PC-9 (cell line): ENCODE measurements at regions of chr5 and their contacts with region 1.

Region 1: DNA sequence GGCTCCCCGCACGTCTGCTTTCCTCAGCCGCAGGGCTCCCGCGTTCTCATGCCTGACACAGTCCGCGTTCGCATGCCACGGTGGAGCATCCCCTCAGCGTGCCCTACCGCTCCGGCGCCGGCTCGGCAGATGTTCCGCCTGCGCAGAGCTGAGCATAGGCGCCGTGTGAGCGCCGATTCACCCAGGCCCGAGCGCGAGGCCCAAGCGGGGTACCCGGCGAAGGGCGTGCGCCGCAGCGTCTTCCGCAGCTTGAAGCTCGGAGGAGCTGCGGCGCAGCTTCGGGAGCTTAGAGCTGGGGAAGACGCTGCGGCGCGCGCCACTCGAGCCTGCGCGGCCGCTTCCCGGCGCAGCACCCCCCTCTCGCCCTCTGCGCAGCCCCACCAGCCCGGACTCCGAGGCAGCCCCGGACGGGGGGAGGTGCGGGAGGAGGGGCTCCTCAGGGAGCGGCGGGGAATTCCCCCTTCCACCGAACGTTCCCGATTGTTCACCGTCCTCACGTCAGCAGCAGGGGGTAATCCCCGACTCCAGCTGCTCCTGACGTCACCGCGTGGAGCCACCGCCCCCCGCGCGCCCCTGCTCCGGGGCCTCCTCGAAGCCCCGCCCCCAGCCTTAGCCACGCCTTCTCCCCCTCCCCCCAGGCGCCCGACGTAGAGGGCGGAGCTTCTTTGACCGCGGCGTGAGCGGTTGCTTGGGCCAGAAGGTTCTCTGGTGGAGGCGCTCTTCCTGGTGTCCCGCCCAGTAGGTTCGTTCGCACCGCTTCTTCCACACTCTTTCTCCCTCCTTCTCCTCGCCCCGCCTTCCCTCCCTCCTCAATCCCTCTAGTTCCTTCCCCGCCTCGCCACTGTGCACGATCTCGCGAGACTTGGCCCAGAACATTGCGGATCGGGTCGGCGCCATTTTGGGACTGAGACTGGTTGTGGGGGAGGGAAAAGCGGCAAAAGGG is at the start of gene GPBP1:
- DNase-seq: peak; percentile 95 to 97
- H3K4me3 ChIP-seq: peak within 1 kb of the TSS; percentile 76
- H3K27ac ChIP-seq: peak within 1 kb of the TSS; percentile 98
- H3K4me1 ChIP-seq: peaks cover 32% of the 10 kb centered on the region
- H3K27me3 ChIP-seq: no peaks in the 10 kb centered on the region
- CTCF ChIP-seq: no peak
- total RNA-seq, gene GPBP1: 62.4 and 75.0 TPM in 2 replicates

Region 2: DNA sequence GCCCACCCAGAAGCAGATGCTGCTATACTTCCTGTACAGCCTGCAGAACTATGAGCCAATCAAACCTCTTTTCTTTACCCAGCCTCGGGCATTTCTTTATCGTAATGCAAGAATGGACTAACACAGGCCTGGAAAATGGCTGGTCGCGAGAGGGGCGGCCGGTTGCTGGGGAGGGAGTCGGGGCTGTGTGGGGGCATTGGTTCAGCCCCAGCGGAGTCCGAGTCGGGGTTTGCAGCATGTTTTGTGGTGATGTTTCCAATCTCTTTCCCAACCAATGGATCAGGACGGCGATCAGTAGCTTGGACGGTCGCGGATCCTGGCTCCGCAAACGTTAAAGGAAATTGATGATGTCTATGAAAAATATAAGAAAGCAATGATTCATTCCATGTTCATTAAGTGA is 1341.0 kb before region 1 on chr5:
- CTCF ChIA-PET with region 1: interaction called, 11 read pairs
- POLR2A ChIA-PET with region 1: no interaction called
- intact Hi-C with region 1: no loop called
- DNase-seq: no peak
- H3K4me3 ChIP-seq: no peak overlapping the region
- H3K27ac ChIP-seq: no peak overlapping the region
- H3K4me1 ChIP-seq: no peaks in the 10 kb centered on the region
- H3K27me3 ChIP-seq: no peaks in the 10 kb centered on the region
- CTCF ChIP-seq: no peak

Region 3: DNA sequence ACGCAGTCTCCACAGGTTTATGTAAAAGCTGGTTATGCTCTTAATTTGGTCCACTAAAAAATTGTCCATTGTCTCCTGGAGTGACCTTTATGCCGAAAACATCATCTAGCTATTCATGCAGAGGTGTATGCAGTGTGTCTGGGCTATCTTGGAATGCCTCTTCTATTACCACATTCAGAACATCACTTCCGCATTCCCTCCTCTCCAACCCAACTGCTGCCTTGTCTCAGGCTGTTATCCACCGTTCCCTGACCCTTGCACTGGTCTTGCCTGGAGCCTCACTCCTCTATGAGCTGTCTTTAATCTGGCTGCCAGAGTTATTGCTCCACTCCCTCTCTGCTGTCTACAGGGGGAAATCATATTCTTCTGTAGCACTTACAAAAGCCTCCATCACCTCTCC is 726.2 kb before region 1 on chr5:
- CTCF ChIA-PET with region 1: no interaction called
- POLR2A ChIA-PET with region 1: interaction called, 21 read pairs
- intact Hi-C with region 1: no loop called
- DNase-seq: peak; percentile 75 to 96
- H3K4me3 ChIP-seq: no peak overlapping the region
- H3K27ac ChIP-seq: peak overlapping the region; percentile 79
- H3K4me1 ChIP-seq: peaks cover 32% of the 10 kb centered on the region
- H3K27me3 ChIP-seq: no peaks in the 10 kb centered on the region
- CTCF ChIP-seq: no peak

Region 4: GRCh38 chr5:56909294-56910209 is 263.9 kb before region 1 on chr5 and contains the start of gene SETD9:
- CTCF ChIA-PET with region 1: interaction called, 12 read pairs
- POLR2A ChIA-PET with region 1: interaction called, 4 read pairs
- intact Hi-C with region 1: loop called (anchors 1 kb)
- DNase-seq: peak; percentile 87 to 97
- H3K4me3 ChIP-seq: peak within 1 kb of the TSS; percentile 98
- H3K27ac ChIP-seq: peak within 1 kb of the TSS; percentile 92
- H3K4me1 ChIP-seq: peaks cover 12% of the 10 kb centered on the region
- H3K27me3 ChIP-seq: no peaks in the 10 kb centered on the region
- CTCF ChIP-seq: no peak
- total RNA-seq, gene SETD9: 6.5 and 7.3 TPM in 2 replicates

Region 5: GRCh38 chr5:57199866-57200265 is 26.4 kb after region 1 on chr5:
- CTCF ChIA-PET with region 1: no interaction called
- POLR2A ChIA-PET with region 1: interaction called, 12 read pairs
- intact Hi-C with region 1: no loop called
- DNase-seq: no peak
- H3K4me3 ChIP-seq: no peak overlapping the region
- H3K27ac ChIP-seq: no peak overlapping the region
- H3K4me1 ChIP-seq: peaks cover 8% of the 10 kb centered on the region
- H3K27me3 ChIP-seq: no peaks in the 10 kb centered on the region
- CTCF ChIP-seq: no peak

Region 6: GRCh38 chr5:57221049-57221568 is 47.7 kb after region 1 on chr5:
- CTCF ChIA-PET with region 1: no interaction called
- POLR2A ChIA-PET with region 1: no interaction called
- intact Hi-C with region 1: loop called (anchors 2 kb)
- DNase-seq: peak in 1 of 2 experiments; percentile 59
- H3K4me3 ChIP-seq: no peak overlapping the region
- H3K27ac ChIP-seq: peak overlapping the region; percentile 38; the same call in 1 of the 2 replicates
- H3K4me1 ChIP-seq: peaks cover 32% of the 10 kb centered on the region
- H3K27me3 ChIP-seq: no peaks in the 10 kb centered on the region
- CTCF ChIP-seq: peak; percentile 91

Region 7: GRCh38 chr5:57394421-57395210 is 221.2 kb after region 1 on chr5:
- CTCF ChIA-PET with region 1: no interaction called
- POLR2A ChIA-PET with region 1: no interaction called
- intact Hi-C with region 1: no loop called
- DNase-seq: no peak
- H3K4me3 ChIP-seq: no peak overlapping the region
- H3K27ac ChIP-seq: no peak overlapping the region
- H3K4me1 ChIP-seq: no peaks in the 10 kb centered on the region
- H3K27me3 ChIP-seq: no peaks in the 10 kb centered on the region
- CTCF ChIP-seq: no peak

Region 8: DNA sequence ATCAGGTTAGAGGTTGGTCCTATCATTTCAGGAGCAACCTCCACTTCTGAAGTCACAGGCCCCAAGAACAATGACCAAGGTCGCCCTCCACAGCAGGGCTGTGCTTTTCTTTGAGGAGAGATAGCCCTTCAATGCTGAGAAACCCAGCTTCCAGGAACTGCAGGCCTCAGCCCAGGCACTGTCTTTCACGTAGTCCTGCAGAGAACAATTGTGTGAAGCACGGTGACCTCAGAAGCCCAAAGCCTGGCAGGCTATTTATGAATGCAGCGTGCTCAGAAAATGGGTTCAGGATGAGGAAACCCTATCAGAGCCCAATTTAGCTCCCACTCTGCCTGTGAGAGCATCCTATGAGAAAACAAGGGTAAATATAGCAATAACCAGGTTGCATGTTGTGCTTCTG is 898.1 kb after region 1 on chr5:
- CTCF ChIA-PET with region 1: no interaction called
- POLR2A ChIA-PET with region 1: no interaction called
- intact Hi-C with region 1: no loop called
- DNase-seq: no peak
- H3K4me3 ChIP-seq: no peak overlapping the region
- H3K27ac ChIP-seq: no peak overlapping the region
- H3K4me1 ChIP-seq: peaks cover 23% of the 10 kb centered on the region
- H3K27me3 ChIP-seq: no peaks in the 10 kb centered on the region
- CTCF ChIP-seq: no peak